Naive thymus-derived CD4-positive, alpha-beta T cell (primary cell): ENCODE measurements at regions of chr1 and their contacts with region 1.

Region 1: GRCh38 chr1:202315576-202316168 is 26.1 kb downstream of the UBE2T start:
- DNase-seq: peak; percentile 42 to 74 (median 64)
- ATAC-seq: peak; percentile 88
- H3K4me3 ChIP-seq: no peak overlapping the region
- H3K4me3 Mint-ChIP-seq: no peak overlapping the region
- H3K27ac ChIP-seq: no peak overlapping the region
- H3K27ac Mint-ChIP-seq: no peak overlapping the region
- H3K4me1 ChIP-seq: no peaks in the 10 kb centered on the region
- H3K4me1 Mint-ChIP-seq: peaks cover 0 to 10% (median 0%) of the 10 kb centered on the region in 7 donors
- H3K27me3 ChIP-seq: no peaks in the 10 kb centered on the region
- H3K27me3 Mint-ChIP-seq: peaks cover 0 to 33% (median 0%) of the 10 kb centered on the region in 5 donors

Region 2: GRCh38 chr1:201877877-201878401 is 437.7 kb before region 1 on chr1:
- CTCF ChIA-PET with region 1: no interaction called
- POLR2A ChIA-PET with region 1: no interaction called
- intact Hi-C with region 1: no loop called
- DNase-seq: peak in 2 of 9 donors; percentile 22 to 23
- ATAC-seq: peak; percentile 55
- H3K4me3 ChIP-seq: no peak overlapping the region
- H3K4me3 Mint-ChIP-seq: no peak overlapping the region
- H3K27ac ChIP-seq: no peak overlapping the region
- H3K27ac Mint-ChIP-seq: peak overlapping the region in 4 of 9 donors; percentile 40 to 60 (median 46)
- H3K4me1 ChIP-seq: no peaks in the 10 kb centered on the region
- H3K4me1 Mint-ChIP-seq: peaks cover 0 to 3% (median 0%) of the 10 kb centered on the region in 7 donors
- H3K27me3 ChIP-seq: no peaks in the 10 kb centered on the region
- H3K27me3 Mint-ChIP-seq: no peaks in the 10 kb centered on the region

Region 3: DNA sequence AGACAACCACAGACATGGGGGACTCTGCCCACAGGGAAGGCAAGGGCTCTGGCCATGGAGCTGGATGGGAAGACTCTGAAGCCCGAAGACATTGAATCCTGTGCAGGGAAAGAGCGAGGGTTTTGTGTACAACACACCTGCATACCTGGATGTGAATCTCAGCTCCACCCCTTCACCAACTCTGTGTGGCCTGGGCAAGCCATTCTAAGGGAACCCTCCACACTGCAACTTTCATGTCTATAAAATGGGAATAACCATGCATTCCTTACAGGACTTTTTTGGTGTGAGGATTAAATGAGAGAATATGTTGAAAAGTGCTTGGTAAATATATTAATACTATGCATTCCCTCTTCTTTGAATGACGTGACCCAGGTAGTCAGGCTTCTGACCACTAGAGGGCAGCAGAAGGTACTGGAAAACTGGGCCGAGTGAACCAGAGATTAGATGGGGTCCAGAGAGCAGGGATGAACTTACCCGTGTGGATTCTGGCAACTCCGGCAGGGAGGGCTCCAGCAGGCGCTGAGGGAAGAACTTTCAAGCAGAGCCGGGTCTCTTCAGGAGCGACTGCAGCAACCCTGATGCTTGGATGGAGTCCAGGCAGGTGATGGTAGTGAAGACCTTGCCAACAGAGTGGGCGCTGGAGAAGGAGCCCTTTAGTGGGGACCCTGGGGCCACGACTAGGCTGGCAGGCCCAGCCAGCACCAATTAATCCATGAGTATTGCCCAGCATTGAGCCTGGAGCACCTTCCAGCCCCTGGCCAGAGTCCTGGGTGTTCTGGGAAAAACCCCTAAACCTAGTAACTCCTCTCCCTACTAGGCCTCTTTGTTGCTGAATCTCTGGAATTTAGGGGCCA is 306.1 kb before region 1 on chr1:
- CTCF ChIA-PET with region 1: no interaction called
- POLR2A ChIA-PET with region 1: no interaction called
- intact Hi-C with region 1: loop called in 1 of 2 experiments (anchors 5 kb)
- DNase-seq: peak; percentile 11 to 69 (median 41)
- ATAC-seq: peak; percentile 85
- H3K4me3 ChIP-seq: no peak overlapping the region
- H3K4me3 Mint-ChIP-seq: no peak overlapping the region
- H3K27ac ChIP-seq: no peak overlapping the region
- H3K27ac Mint-ChIP-seq: no peak overlapping the region
- H3K4me1 ChIP-seq: no peaks in the 10 kb centered on the region
- H3K4me1 Mint-ChIP-seq: peaks cover 0 to 2% (median 0%) of the 10 kb centered on the region in 7 donors
- H3K27me3 ChIP-seq: no peaks in the 10 kb centered on the region
- H3K27me3 Mint-ChIP-seq: no peaks in the 10 kb centered on the region

Region 4: GRCh38 chr1:202160377-202160940 is 155.2 kb before region 1 on chr1 and contains the start of gene PTPN7:
- CTCF ChIA-PET with region 1: interaction called, 19 read pairs
- POLR2A ChIA-PET with region 1: no interaction called
- intact Hi-C with region 1: loop called in 1 of 2 experiments (anchors 1 kb)
- DNase-seq: peak; percentile 58 to 84 (median 80)
- ATAC-seq: peak; percentile 80
- H3K4me3 ChIP-seq: peak within 1 kb of the TSS; percentile 98
- H3K4me3 Mint-ChIP-seq: peak within 1 kb of the TSS; percentile 91 to 99 (median 98)
- H3K27ac ChIP-seq: peak within 1 kb of the TSS; percentile 90
- H3K27ac Mint-ChIP-seq: peak within 1 kb of the TSS; percentile 97 to 99 (median 98)
- H3K4me1 ChIP-seq: peaks cover 77 to 84% of the 10 kb centered on the region in 2 donors
- H3K4me1 Mint-ChIP-seq: peaks cover 47 to 98% (median 82%) of the 10 kb centered on the region in 7 donors
- H3K27me3 ChIP-seq: no peaks in the 10 kb centered on the region
- H3K27me3 Mint-ChIP-seq: no peaks in the 10 kb centered on the region
- total RNA-seq, gene PTPN7: 43.2 to 258 (median 97.0) TPM

Region 5: GRCh38 chr1:202192770-202193613 is 122.7 kb before region 1 on chr1:
- CTCF ChIA-PET with region 1: interaction called, 15 read pairs
- POLR2A ChIA-PET with region 1: no interaction called
- intact Hi-C with region 1: loop called (anchors 1 kb)
- DNase-seq: peak in 8 of 9 donors; percentile 18 to 57 (median 40)
- ATAC-seq: peak; percentile 48
- H3K4me3 ChIP-seq: no peak overlapping the region
- H3K4me3 Mint-ChIP-seq: peak overlapping the region in 3 of 10 donors; percentile 52 to 74 (median 54)
- H3K27ac ChIP-seq: no peak overlapping the region
- H3K27ac Mint-ChIP-seq: no peak overlapping the region
- H3K4me1 ChIP-seq: peaks cover 6 to 8% of the 10 kb centered on the region in 2 donors
- H3K4me1 Mint-ChIP-seq: peaks cover 1 to 16% (median 7%) of the 10 kb centered on the region in 7 donors
- H3K27me3 ChIP-seq: no peaks in the 10 kb centered on the region
- H3K27me3 Mint-ChIP-seq: peaks cover 21 to 42% (median 26%) of the 10 kb centered on the region in 5 donors

Region 6: DNA sequence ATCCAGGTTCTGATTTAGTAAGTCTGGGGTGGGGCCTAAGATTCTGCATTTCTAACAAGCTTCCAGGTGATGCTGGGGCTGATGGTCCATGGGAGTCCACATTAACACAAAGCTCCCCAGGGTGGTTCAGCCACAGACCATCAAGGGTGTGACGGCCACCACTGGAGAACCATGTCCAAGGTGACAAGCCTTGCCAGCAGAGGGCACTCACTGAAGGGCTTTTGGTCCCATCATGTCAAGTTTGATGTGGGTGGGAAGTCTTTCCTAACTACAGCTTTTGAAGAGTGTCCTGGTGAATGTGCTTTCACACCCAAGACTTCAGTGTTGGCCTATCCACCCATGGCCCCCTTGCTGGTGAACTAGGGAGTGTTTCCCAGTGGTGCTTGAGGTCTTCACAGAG is 41.1 kb before region 1 on chr1:
- CTCF ChIA-PET with region 1: interaction called, 15 read pairs
- POLR2A ChIA-PET with region 1: no interaction called
- intact Hi-C with region 1: loop called (anchors 1 kb)
- DNase-seq: peak in 4 of 9 donors; percentile 8 to 31 (median 16)
- ATAC-seq: peak; percentile 57
- H3K4me3 ChIP-seq: no peak overlapping the region
- H3K4me3 Mint-ChIP-seq: no peak overlapping the region
- H3K27ac ChIP-seq: no peak overlapping the region
- H3K27ac Mint-ChIP-seq: no peak overlapping the region
- H3K4me1 ChIP-seq: no peaks in the 10 kb centered on the region
- H3K4me1 Mint-ChIP-seq: peaks cover 0 to 4% (median 0%) of the 10 kb centered on the region in 7 donors
- H3K27me3 ChIP-seq: no peaks in the 10 kb centered on the region
- H3K27me3 Mint-ChIP-seq: peaks cover 0 to 13% (median 4%) of the 10 kb centered on the region in 5 donors